WTC11 (cell line): ENCODE measurements at regions of chr16 and their contacts with region 1.

Region 1: DNA sequence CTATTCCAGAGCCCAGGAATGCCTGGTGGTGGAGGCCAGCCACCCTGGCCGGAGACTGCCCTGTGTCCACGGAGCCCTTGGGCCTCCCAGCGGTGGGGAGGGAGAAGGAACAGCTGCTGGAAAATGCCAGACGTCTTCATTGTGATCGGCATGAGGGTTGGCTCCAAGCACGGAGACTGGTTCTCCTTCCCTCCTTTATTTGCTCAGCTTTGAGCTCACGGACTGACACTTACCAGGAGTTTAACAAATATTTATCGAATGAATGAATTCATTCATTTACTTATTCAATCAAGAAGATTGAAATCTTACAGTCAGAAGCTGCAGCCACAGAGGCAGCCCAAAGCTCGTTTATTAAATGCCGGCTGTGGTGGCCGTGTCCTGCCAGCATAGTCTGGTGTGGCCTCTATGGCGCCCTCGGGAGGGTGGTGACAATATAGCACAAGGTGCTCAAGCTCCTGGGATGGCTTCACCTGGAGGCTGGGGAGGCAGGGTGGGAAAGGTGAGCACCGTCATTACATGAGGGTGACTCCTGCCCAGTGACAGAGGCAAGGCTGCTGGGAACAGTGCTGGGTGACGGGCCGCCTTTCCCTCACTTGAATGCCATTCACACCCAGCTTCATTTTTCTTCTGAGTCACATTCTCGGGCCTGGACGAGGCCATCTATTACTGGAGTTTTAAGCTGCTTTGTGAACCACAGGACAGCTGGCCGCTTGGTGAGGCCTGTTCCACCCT is 31.0 kb upstream of the JPH3 start:
- DNase-seq: peak; percentile 85
- ATAC-seq: peak; percentile 77
- H3K4me3 Mint-ChIP-seq: no peak overlapping the region
- H3K27ac Mint-ChIP-seq: no peak overlapping the region
- H3K4me1 Mint-ChIP-seq: peaks cover 28% of the 10 kb centered on the region
- H3K27me3 Mint-ChIP-seq: no peaks in the 10 kb centered on the region; the same call in 1 of the 2 replicates
- CTCF ChIP-seq: no peak

Region 2: DNA sequence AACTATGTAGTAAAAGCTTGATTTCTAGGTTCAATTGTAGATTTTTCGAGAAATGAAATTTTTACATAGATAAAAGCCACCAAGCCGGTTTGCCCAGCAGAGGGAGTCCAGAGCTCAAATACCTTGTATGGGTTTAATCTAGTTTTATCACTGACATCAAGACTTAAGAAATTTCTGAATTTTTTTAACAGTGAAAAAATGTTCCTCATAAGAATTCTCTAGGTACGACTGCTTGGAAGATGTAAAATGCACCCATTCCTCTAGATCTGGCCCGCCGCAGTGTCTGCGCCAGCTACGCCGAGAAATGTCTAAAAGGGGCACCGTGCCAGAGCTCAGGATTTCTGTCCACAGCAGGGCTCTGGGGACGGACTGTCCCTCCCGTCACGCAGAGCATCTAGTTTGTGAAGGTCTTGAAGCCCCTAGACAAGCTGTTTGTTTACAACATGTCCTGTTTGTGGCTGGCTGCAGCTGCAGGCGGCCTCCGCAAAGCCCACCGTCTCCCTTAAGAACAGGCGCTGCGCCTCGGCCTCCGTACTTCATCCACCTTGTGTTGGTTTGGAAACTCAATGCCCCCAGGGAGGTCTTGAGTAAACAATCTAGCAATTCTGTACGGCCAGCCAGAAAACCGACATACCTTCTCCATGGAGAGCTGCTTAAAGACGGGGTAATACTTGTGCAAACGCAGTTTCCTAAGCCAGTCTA is 154.3 kb before region 1 on chr16:
- CTCF ChIA-PET with region 1: interaction called, 15 read pairs
- POLR2A ChIA-PET with region 1: no interaction called
- DNase-seq: no peak
- ATAC-seq: no peak
- H3K4me3 Mint-ChIP-seq: no peak overlapping the region
- H3K27ac Mint-ChIP-seq: no peak overlapping the region
- H3K4me1 Mint-ChIP-seq: no peaks in the 10 kb centered on the region
- H3K27me3 Mint-ChIP-seq: no peaks in the 10 kb centered on the region
- CTCF ChIP-seq: no peak; the same call in 1 of the 2 replicates

Region 3: GRCh38 chr16:87515475-87516330 is 55.6 kb before region 1 on chr16:
- CTCF ChIA-PET with region 1: interaction called, 10 read pairs
- POLR2A ChIA-PET with region 1: no interaction called
- DNase-seq: no peak
- ATAC-seq: no peak
- H3K4me3 Mint-ChIP-seq: no peak overlapping the region
- H3K27ac Mint-ChIP-seq: no peak overlapping the region
- H3K4me1 Mint-ChIP-seq: peaks cover 10% of the 10 kb centered on the region
- H3K27me3 Mint-ChIP-seq: peaks cover 2% of the 10 kb centered on the region; the same call in 1 of the 2 replicates
- CTCF ChIP-seq: no peak

Region 4: GRCh38 chr16:87560428-87561199 is 10.7 kb before region 1 on chr16:
- CTCF ChIA-PET with region 1: interaction called, 81 read pairs
- POLR2A ChIA-PET with region 1: no interaction called
- DNase-seq: peak; percentile 93
- ATAC-seq: peak; percentile 97
- H3K4me3 Mint-ChIP-seq: no peak overlapping the region
- H3K27ac Mint-ChIP-seq: no peak overlapping the region
- H3K4me1 Mint-ChIP-seq: no peaks in the 10 kb centered on the region
- H3K27me3 Mint-ChIP-seq: no peaks in the 10 kb centered on the region; the same call in 1 of the 2 replicates
- CTCF ChIP-seq: no peak

Region 5: GRCh38 chr16:87602821-87603683 is 31.8 kb after region 1 on chr16:
- CTCF ChIA-PET with region 1: interaction called, 18 read pairs
- POLR2A ChIA-PET with region 1: no interaction called
- DNase-seq: peak; percentile 55
- ATAC-seq: peak; percentile 6
- H3K4me3 Mint-ChIP-seq: peak overlapping the region; percentile 97
- H3K27ac Mint-ChIP-seq: no peak overlapping the region
- H3K4me1 Mint-ChIP-seq: peaks cover 34% of the 10 kb centered on the region
- H3K27me3 Mint-ChIP-seq: peaks cover 17% of the 10 kb centered on the region
- CTCF ChIP-seq: no peak